ENCODE measurements at regions of chr11 and their contacts with region 1.

Region 1: GRCh38 chr11:113875234-113876073 is at the start of gene USP28:
- DNase-seq: peak; percentile 89
- ATAC-seq: peak; percentile 90
- H3K4me3 ChIP-seq: peak within 1 kb of the TSS; percentile 72 to 89 (median 85)
- H3K27ac ChIP-seq: peak within 1 kb of the TSS; percentile 87
- H3K4me1 ChIP-seq: peaks cover 68% of the 10 kb centered on the region
- H3K27me3 ChIP-seq: no peaks in the 10 kb centered on the region; a peak in 1 of 5 replicates
- CTCF ChIP-seq: no peak; the same call in 1 of the 2 replicates
- EP300 ChIP-seq: peak in 1 of 2 experiments; percentile 12; a peak in 1 of 4 replicates
- POLR2A ChIP-seq: peak; percentile 94 to 96
- RAD21 ChIP-seq: peak; percentile 7; the same call in 1 of the 2 replicates
- total RNA-seq, gene USP28: 34.3 and 52.0 TPM in 2 replicates

Region 2: DNA sequence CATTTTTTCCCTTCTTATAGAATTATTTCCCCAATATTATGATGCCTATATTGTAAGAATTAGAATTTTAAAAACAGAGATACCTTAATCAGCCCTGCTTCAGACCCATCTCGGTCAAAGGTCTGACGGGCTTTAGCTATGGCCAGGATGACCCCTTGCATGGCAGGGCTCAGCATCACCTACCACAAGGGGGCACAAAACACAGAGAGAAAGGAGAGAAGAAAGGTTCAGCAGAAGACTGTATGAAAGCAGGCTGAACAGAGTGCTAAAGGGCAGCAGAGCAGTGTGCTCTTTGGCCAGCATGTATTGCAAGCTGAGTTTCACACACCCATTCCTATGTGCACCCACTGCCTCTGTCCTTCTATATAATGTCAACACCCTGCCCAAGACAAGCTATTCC is 69.0 kb before region 1 on chr11:
- CTCF ChIA-PET with region 1: no interaction called
- POLR2A ChIA-PET with region 1: no interaction called
- in situ Hi-C with region 1: no loop called
- intact Hi-C with region 1: loop called (anchors 5 kb)
- DNase-seq: peak; percentile 64
- ATAC-seq: peak; percentile 100
- H3K4me3 ChIP-seq: no peak overlapping the region
- H3K27ac ChIP-seq: no peak overlapping the region
- H3K4me1 ChIP-seq: peaks cover 9% of the 10 kb centered on the region; the same call in 1 of the 2 replicates
- H3K27me3 ChIP-seq: no peaks in the 10 kb centered on the region
- CTCF ChIP-seq: peak; percentile 71
- EP300 ChIP-seq: no peak
- POLR2A ChIP-seq: no peak
- RAD21 ChIP-seq: peak; percentile 14; the same call in 1 of the 2 replicates

Region 3: DNA sequence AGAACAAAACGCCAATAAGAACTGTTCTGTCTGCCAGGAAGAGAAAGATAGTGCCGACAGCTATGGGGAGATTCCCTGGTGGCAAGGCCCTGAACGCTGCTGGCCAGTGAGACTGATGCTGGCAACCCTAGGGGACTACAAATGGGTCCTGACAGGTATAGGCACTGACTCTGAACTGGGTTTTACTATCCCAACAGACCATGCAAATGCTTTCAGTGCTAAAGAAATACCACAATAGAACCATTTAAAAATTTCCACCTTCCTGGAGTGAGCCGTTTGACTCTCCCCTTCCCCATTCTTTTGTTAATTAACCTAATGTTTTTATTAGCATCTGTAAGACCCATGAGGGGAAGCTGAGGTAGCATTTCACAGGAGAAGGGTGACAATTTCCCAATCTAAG is 25.7 kb before region 1 on chr11:
- CTCF ChIA-PET with region 1: no interaction called
- POLR2A ChIA-PET with region 1: no interaction called
- in situ Hi-C with region 1: no loop called
- intact Hi-C with region 1: no loop called
- DNase-seq: no peak
- ATAC-seq: no peak
- H3K4me3 ChIP-seq: no peak overlapping the region
- H3K27ac ChIP-seq: no peak overlapping the region
- H3K4me1 ChIP-seq: no peaks in the 10 kb centered on the region
- H3K27me3 ChIP-seq: no peaks in the 10 kb centered on the region
- CTCF ChIP-seq: no peak
- EP300 ChIP-seq: no peak
- POLR2A ChIP-seq: no peak
- RAD21 ChIP-seq: no peak

Region 4: GRCh38 chr11:113862435-113862834 is 13.0 kb before region 1 on chr11:
- CTCF ChIA-PET with region 1: no interaction called
- POLR2A ChIA-PET with region 1: interaction called, 11 read pairs
- in situ Hi-C with region 1: no loop called
- intact Hi-C with region 1: no loop called
- DNase-seq: peak; percentile 79
- ATAC-seq: peak; percentile 46; the same call in 1 of the 3 replicates
- H3K4me3 ChIP-seq: no peak overlapping the region
- H3K27ac ChIP-seq: no peak overlapping the region
- H3K4me1 ChIP-seq: peaks cover 18% of the 10 kb centered on the region
- H3K27me3 ChIP-seq: no peaks in the 10 kb centered on the region
- CTCF ChIP-seq: no peak
- EP300 ChIP-seq: no peak
- POLR2A ChIP-seq: no peak
- RAD21 ChIP-seq: no peak

Region 5: DNA sequence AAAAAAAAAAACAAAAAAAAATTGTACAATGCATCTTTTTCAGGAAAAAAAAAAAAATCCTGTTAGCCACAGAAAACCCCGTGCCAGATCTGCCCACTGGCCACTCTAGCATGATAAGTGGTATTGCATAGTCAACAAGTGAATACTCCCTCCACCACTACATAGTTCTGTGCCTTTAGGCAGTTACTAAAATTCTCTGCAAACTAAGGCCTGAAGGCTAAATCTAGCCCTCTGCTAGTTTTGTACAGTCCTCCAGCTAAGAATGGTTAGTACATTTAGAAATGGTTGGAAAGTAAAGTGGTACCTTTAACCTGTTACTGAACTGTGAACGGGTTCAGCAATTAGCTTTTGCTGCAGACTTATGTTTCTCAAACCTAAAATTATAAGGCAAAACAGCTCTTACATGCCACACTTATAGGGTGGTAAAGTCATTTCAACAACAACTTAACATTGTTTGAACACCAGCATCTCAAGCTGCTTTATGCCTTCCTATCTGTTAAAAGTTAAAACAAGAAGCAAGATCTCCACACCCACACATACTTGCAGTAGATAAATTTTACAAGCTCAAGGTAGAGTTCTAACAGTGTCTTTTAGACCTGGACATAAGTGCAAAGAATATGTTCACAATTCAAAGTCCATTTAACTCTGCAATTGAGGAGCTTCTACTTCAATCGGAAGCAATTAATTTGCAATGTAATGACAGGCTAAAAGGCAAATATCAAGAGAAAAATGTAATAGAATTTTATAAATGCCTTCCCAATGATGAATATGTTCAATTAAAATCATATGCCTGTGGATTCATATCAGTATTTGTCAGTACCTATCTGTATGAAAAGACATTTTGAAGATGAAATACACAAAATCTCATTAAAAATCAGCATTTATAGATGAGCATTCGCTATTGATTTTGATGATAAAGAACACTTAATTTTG is 517.5 kb after region 1 on chr11:
- CTCF ChIA-PET with region 1: no interaction called
- POLR2A ChIA-PET with region 1: no interaction called
- in situ Hi-C with region 1: no loop called
- intact Hi-C with region 1: no loop called
- DNase-seq: no peak
- ATAC-seq: peak; percentile 31; the same call in 1 of the 3 replicates
- H3K4me3 ChIP-seq: no peak overlapping the region
- H3K27ac ChIP-seq: no peak overlapping the region
- H3K4me1 ChIP-seq: peaks cover 21% of the 10 kb centered on the region; the same call in 1 of the 2 replicates
- H3K27me3 ChIP-seq: no peaks in the 10 kb centered on the region
- CTCF ChIP-seq: no peak
- EP300 ChIP-seq: no peak
- POLR2A ChIP-seq: no peak
- RAD21 ChIP-seq: no peak

Measured in HepG2 (cell line).